ENCODE measurements at regions of chr17 and their contacts with region 1.

Region 1: DNA sequence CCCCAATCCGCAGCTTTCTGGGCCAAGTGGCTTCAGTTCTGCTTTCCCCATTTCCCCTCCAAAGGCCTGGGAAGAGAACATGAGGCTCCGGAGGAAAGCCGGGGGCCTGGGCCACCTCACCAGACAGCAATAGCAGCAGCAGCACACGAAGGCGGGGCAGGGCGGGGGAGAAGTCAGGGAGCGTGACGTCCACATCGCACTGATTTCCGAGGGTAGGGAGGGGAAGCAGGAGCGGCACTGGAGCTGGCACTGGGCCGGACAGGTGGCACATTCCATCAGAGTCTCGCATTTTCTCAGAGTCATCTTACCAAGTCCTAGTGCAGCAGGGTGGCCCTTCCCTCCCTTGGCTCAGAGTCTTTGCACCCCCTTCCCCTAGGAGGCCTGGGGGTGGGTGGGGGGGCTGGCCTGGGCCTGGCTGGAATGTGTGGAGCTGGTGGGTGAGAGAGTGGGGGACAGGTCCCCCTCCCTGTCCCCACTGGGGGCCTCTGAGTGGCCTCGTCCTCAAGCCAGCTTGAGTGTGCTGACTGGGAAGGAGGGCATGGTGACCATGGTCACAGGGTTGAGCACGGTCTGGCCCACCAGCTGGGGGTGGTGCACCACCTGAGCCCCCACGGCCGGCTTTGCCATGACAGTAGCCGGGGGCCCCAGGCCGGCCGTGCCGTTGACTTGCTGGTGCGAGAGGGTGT is 14.3 kb downstream of the MNT start:
- DNase-seq: no peak
- ATAC-seq: no peak
- H3K4me3 Mint-ChIP-seq: no peak overlapping the region
- H3K27ac Mint-ChIP-seq: peak overlapping the region; percentile 27; the same call in 1 of the 2 replicates
- H3K4me1 Mint-ChIP-seq: peaks cover 26% of the 10 kb centered on the region
- H3K27me3 Mint-ChIP-seq: no peaks in the 10 kb centered on the region
- CTCF ChIP-seq: no peak

Region 2: GRCh38 chr17:2323629-2324314 is 62.8 kb before region 1 on chr17:
- CTCF ChIA-PET with region 1: no interaction called
- POLR2A ChIA-PET with region 1: no interaction called
- DNase-seq: no peak
- ATAC-seq: no peak
- H3K4me3 Mint-ChIP-seq: no peak overlapping the region
- H3K27ac Mint-ChIP-seq: no peak overlapping the region
- H3K4me1 Mint-ChIP-seq: no peaks in the 10 kb centered on the region
- H3K27me3 Mint-ChIP-seq: no peaks in the 10 kb centered on the region
- CTCF ChIP-seq: no peak

Region 3: GRCh38 chr17:2336215-2336851 is 50.2 kb before region 1 on chr17 and contains the start of gene TSR1:
- CTCF ChIA-PET with region 1: interaction called, 28 read pairs
- POLR2A ChIA-PET with region 1: interaction called, 3 read pairs
- DNase-seq: peak; percentile 90
- ATAC-seq: peak; percentile 81
- H3K4me3 Mint-ChIP-seq: no peak within 1 kb of the TSS; the same call in 1 of the 2 replicates
- H3K27ac Mint-ChIP-seq: peak within 1 kb of the TSS; percentile 99
- H3K4me1 Mint-ChIP-seq: peaks cover 4% of the 10 kb centered on the region
- H3K27me3 Mint-ChIP-seq: no peaks in the 10 kb centered on the region
- CTCF ChIP-seq: no peak
- total RNA-seq, gene TSR1: 59.1 to 74.3 TPM (median 59.7 TPM) in 3 replicates

Region 4: GRCh38 chr17:2354311-2354710 is 32.2 kb before region 1 on chr17:
- CTCF ChIA-PET with region 1: interaction called, 24 read pairs
- POLR2A ChIA-PET with region 1: no interaction called
- DNase-seq: no peak
- ATAC-seq: no peak
- H3K4me3 Mint-ChIP-seq: no peak overlapping the region
- H3K27ac Mint-ChIP-seq: no peak overlapping the region
- H3K4me1 Mint-ChIP-seq: peaks cover 14% of the 10 kb centered on the region; the same call in 1 of the 2 replicates
- H3K27me3 Mint-ChIP-seq: no peaks in the 10 kb centered on the region
- CTCF ChIP-seq: no peak

Region 5: GRCh38 chr17:2374549-2375277 is 11.8 kb before region 1 on chr17:
- CTCF ChIA-PET with region 1: interaction called, 67 read pairs
- POLR2A ChIA-PET with region 1: interaction called, 3 read pairs
- DNase-seq: no peak
- ATAC-seq: no peak
- H3K4me3 Mint-ChIP-seq: no peak overlapping the region
- H3K27ac Mint-ChIP-seq: peak overlapping the region; percentile 1; the same call in 1 of the 2 replicates
- H3K4me1 Mint-ChIP-seq: peaks cover 8% of the 10 kb centered on the region
- H3K27me3 Mint-ChIP-seq: no peaks in the 10 kb centered on the region
- CTCF ChIP-seq: no peak

Region 6: DNA sequence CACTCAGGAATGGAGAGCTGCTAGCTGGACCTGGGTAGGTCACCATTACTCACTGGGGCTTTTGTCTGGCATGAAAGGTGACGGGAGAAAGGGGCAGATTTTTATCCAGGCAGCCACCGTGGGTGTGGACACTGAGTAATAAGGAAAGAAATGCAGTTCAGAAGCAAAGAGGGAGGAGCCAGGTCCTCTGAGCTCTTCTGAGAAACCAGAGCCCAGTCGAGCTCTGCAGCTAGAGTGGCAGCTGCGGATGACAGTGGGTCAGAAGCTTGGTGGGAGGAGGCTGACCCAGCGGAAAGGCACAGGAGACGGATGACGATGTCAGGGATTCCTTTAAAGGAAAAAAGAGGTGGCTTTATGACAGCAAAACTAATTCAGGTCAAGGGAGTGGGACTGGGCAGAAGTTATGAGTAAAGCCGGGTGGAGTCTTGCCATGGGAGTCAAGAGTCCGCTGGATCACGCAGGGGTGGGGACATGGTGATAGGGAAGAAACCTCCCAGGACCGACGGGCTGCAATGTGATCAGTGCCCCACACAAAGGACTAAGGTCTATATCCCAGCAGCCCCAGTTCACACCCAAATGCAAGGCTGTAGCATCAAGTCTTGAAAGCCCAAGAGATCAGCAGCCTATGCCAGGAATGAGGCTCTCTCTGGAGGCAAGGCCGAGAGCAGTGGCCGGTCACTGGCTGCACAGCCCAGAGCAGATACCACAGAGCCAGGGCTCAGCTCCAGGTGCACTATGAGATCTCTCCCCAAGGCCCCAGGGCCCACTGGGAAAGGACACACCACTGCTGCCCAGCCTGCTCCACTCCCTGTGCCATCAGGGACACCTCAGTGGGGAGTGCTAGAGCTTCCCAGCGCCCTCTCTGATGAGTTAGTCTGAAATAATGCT is 20.6 kb after region 1 on chr17:
- CTCF ChIA-PET with region 1: interaction called, 62 read pairs
- POLR2A ChIA-PET with region 1: interaction called, 3 read pairs
- DNase-seq: no peak
- ATAC-seq: no peak
- H3K4me3 Mint-ChIP-seq: no peak overlapping the region
- H3K27ac Mint-ChIP-seq: peak overlapping the region; percentile 74
- H3K4me1 Mint-ChIP-seq: peaks cover 6% of the 10 kb centered on the region; the same call in 1 of the 2 replicates
- H3K27me3 Mint-ChIP-seq: 0 out of 2 replicates have a peak, but pooled peaks cover 5% of the 10 kb centered on the region
- CTCF ChIP-seq: no peak

Region 7: DNA sequence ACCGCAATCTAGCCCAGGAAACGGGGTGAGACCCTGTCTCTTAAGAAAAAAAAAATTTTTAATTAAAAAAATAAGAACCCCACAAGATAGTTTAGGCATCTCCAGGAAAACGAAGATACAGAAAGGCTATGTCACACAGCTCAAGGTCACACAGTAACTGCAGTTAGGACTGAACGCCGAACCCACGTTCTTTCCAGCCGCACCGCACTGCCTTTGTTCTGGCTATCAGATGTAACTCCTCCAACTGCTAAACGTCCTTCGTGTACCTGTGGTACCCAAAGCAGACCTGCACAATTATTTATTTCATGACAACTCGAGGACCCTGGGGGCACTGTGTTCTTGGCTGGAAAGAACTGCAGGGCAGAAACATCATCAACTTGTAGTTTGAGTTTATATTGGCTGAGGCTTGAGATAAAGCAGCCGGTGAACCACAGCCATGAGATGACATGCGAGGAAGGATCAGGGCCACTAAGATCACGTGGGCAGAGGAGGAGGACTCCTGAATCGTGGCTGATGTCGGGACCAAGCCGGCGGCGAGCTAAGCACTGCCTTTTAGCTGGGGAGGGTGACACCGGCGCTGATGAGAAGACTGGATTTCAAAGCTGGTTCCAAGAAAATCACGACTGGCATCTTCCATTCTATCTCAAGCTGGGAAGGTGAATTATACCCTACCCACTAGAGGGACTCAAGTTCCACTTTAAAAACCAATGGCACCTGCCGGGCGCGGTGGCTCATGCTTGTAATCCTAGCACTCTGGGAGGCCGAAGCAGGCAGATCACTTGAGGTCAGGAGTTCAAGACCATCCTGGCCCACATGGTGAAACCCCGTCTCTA is 35.0 kb after region 1 on chr17:
- CTCF ChIA-PET with region 1: interaction called, 268 read pairs
- POLR2A ChIA-PET with region 1: interaction called, 11 read pairs
- DNase-seq: peak; percentile 41
- ATAC-seq: 0 out of 2 replicates have a peak, but pooled peaks have one; percentile 30
- H3K4me3 Mint-ChIP-seq: no peak overlapping the region
- H3K27ac Mint-ChIP-seq: no peak overlapping the region
- H3K4me1 Mint-ChIP-seq: no peaks in the 10 kb centered on the region
- H3K27me3 Mint-ChIP-seq: no peaks in the 10 kb centered on the region
- CTCF ChIP-seq: no peak

Measured in WTC11 (cell line).